ENCODE measurements at regions of chr4 and their contacts with region 1.

Region 1: GRCh38 chr4:107989537-107990386 is at the start of gene HADH:
- DNase-seq: peak; percentile 94 to 97 (median 95)
- ATAC-seq: peak; percentile 98 to 99 (median 98)
- H3K4me3 ChIP-seq: peak within 1 kb of the TSS; percentile 62 to 92 (median 84)
- H3K27ac ChIP-seq: peak within 1 kb of the TSS; percentile 77 to 97 (median 94)
- H3K4me1 ChIP-seq: peaks cover 0 to 57% (median 33%) of the 10 kb centered on the region in 12 donors
- H3K27me3 ChIP-seq: no peaks in the 10 kb centered on the region
- CTCF ChIP-seq: no peak
- POLR2A ChIP-seq: peak; percentile 95 to 98
- total RNA-seq, gene HADH: 138 to 382 (median 217) TPM

Region 2: GRCh38 chr4:107719922-107720722 is 269.6 kb before region 1 on chr4 and contains the start of gene PAPSS1:
- intact Hi-C with region 1: loop called in 1 of 10 experiments (anchors 5 kb)
- DNase-seq: peak; percentile 97 to 98 (median 97)
- ATAC-seq: peak; percentile 99
- H3K4me3 ChIP-seq: peak within 1 kb of the TSS; percentile 74 to 100 (median 94)
- H3K27ac ChIP-seq: peak within 1 kb of the TSS; percentile 48 to 95 (median 88)
- H3K4me1 ChIP-seq: peaks cover 0 to 32% (median 14%) of the 10 kb centered on the region in 12 donors
- H3K27me3 ChIP-seq: no peaks in the 10 kb centered on the region
- CTCF ChIP-seq: no peak
- POLR2A ChIP-seq: peak in 1 of 2 donors; percentile 74
- total RNA-seq, gene PAPSS1: 7.4 to 32.7 (median 9.3) TPM

Region 3: DNA sequence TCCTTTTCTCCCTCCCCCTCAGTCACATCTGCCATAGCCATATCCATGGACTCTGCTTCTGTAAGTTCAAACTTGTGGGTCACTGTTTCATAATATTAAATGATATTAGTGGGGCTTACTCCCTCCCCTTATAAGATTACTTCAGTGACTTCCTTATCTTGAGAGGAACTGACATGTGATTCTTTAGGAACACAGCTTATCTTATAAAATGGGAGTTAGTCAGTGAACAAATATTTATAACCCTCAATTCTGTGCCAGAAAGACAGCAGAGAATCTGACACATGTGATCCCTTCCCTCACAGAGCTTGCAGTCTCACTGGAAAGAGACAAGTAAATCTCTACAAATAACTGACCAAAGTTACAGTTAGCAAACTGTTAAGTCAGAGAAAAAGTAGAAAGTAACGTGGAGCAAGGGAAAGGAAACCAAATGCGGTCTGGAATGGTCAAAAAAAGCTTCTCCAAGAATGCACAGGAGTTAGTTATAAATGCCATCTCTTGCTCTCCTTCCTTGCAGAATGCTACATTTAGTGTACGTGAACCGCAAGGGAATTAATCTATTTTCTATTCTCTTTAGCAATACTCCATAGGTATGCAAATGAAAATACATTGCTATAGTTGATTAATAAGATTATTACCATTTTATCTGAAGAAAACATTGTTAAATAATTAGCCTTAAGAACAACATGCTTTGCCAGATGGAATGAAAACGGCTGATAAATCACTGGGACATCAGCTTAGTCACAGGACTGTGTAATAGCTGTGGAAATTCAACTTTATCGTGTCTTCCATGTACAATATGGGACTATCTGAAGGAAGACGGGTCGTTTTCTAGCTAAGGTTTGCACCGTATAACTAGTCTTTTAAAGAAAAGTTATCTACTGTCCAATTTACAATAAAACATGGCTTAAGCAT is 136.1 kb before region 1 on chr4:
- intact Hi-C with region 1: loop called in 2 of 10 experiments (anchors 10 kb)
- DNase-seq: no peak
- ATAC-seq: peak; percentile 66 to 78 (median 73)
- H3K4me3 ChIP-seq: peak overlapping the region in 8 of 12 donors; percentile 21 to 51 (median 30)
- H3K27ac ChIP-seq: peak overlapping the region; percentile 56 to 88 (median 70)
- H3K4me1 ChIP-seq: peaks cover 0 to 63% (median 44%) of the 10 kb centered on the region in 12 donors
- H3K27me3 ChIP-seq: no peaks in the 10 kb centered on the region
- CTCF ChIP-seq: no peak
- POLR2A ChIP-seq: no peak

Region 4: GRCh38 chr4:107930821-107931774 is 58.7 kb before region 1 on chr4 and contains the start of gene CYP2U1:
- intact Hi-C with region 1: loop called in 8 of 10 experiments (anchors 1 to 10 kb)
- DNase-seq: peak; percentile 91 to 94 (median 91)
- ATAC-seq: peak; percentile 96 to 99 (median 98)
- H3K4me3 ChIP-seq: peak within 1 kb of the TSS; percentile 56 to 95 (median 79)
- H3K27ac ChIP-seq: peak within 1 kb of the TSS; percentile 57 to 91 (median 82)
- H3K4me1 ChIP-seq: peaks cover 0 to 34% (median 11%) of the 10 kb centered on the region in 12 donors
- H3K27me3 ChIP-seq: no peaks in the 10 kb centered on the region
- CTCF ChIP-seq: peak in 8 of 12 donors; percentile 11 to 44 (median 26)
- POLR2A ChIP-seq: peak; percentile 54 to 79
- total RNA-seq, gene CYP2U1: 5.5 to 11.8 (median 6.9) TPM

Measured in heart left ventricle (tissue), 16 donors.